Transverse colon (tissue), 4 donors: ENCODE measurements at regions of chr15 and their contacts with region 1.

Region 1: GRCh38 chr15:91572114-91572540 is 281.4 kb upstream of the SLCO3A1 start:
- DNase-seq: no peak
- H3K4me3 ChIP-seq: no peak overlapping the region
- H3K27ac ChIP-seq: no peak overlapping the region
- H3K4me1 ChIP-seq: no peaks in the 10 kb centered on the region
- H3K27me3 ChIP-seq: no peaks in the 10 kb centered on the region
- CTCF ChIP-seq: no peak
- EP300 ChIP-seq: no peak
- POLR2A ChIP-seq: no peak

Region 2: GRCh38 chr15:91522663-91523332 is 49.3 kb before region 1 on chr15:
- in situ Hi-C with region 1: no loop called
- intact Hi-C with region 1: no loop called
- DNase-seq: no peak
- H3K4me3 ChIP-seq: no peak overlapping the region
- H3K27ac ChIP-seq: no peak overlapping the region
- H3K4me1 ChIP-seq: no peaks in the 10 kb centered on the region
- H3K27me3 ChIP-seq: no peaks in the 10 kb centered on the region
- CTCF ChIP-seq: peak in 3 of 5 experiments; percentile 8 to 29 (median 15)
- EP300 ChIP-seq: no peak
- POLR2A ChIP-seq: no peak

Region 3: GRCh38 chr15:91555312-91555711 is 16.8 kb before region 1 on chr15:
- in situ Hi-C with region 1: no loop called
- intact Hi-C with region 1: loop called (anchors 2 kb)
- DNase-seq: no peak
- H3K4me3 ChIP-seq: no peak overlapping the region
- H3K27ac ChIP-seq: no peak overlapping the region
- H3K4me1 ChIP-seq: no peaks in the 10 kb centered on the region
- H3K27me3 ChIP-seq: no peaks in the 10 kb centered on the region
- CTCF ChIP-seq: no peak
- EP300 ChIP-seq: no peak
- POLR2A ChIP-seq: no peak